Activated naive CD4-positive, alpha-beta T cell treated with anti-CD3 and anti-CD28 coated beads, Interleukin-2, amount 10 ng/mL, durations not matched to agents 7 days and 5 days (primary cell): ENCODE measurements at regions of chr10 and their contacts with region 1.

Region 1: GRCh38 chr10:98467506-98468346 is 21.0 kb upstream of the HPS1 start:
- DNase-seq: peak; percentile 73
- H3K4me3 Mint-ChIP-seq: peak overlapping the region; percentile 84
- H3K27ac Mint-ChIP-seq: no peak overlapping the region
- H3K4me1 Mint-ChIP-seq: peaks cover 8% of the 10 kb centered on the region
- H3K27me3 Mint-ChIP-seq: peaks cover 44% of the 10 kb centered on the region

Region 2: DNA sequence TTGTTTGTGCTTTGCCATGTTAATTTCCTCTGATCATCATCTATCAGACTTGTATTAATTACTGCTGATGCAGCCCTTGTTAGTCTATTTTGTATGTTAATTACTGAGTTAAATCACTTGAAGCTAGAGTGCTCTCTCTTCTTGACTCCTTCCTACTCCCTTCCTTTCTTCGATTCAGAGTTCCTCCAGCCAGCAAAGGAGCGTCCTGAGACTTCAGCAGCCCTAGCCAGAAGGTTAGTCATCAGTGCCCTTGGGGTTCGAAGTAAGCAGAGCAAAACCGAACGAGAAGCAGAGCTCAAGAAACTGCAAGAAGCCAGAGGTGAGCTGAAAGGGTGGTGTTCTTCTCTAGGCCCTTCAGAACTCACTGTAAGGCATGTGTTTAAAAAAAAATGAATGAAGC is 231.9 kb before region 1 on chr10:
- CTCF ChIA-PET with region 1: no interaction called
- DNase-seq: no peak
- H3K4me3 Mint-ChIP-seq: no peak overlapping the region
- H3K27ac Mint-ChIP-seq: no peak overlapping the region
- H3K4me1 Mint-ChIP-seq: peaks cover 3% of the 10 kb centered on the region
- H3K27me3 Mint-ChIP-seq: no peaks in the 10 kb centered on the region

Region 3: DNA sequence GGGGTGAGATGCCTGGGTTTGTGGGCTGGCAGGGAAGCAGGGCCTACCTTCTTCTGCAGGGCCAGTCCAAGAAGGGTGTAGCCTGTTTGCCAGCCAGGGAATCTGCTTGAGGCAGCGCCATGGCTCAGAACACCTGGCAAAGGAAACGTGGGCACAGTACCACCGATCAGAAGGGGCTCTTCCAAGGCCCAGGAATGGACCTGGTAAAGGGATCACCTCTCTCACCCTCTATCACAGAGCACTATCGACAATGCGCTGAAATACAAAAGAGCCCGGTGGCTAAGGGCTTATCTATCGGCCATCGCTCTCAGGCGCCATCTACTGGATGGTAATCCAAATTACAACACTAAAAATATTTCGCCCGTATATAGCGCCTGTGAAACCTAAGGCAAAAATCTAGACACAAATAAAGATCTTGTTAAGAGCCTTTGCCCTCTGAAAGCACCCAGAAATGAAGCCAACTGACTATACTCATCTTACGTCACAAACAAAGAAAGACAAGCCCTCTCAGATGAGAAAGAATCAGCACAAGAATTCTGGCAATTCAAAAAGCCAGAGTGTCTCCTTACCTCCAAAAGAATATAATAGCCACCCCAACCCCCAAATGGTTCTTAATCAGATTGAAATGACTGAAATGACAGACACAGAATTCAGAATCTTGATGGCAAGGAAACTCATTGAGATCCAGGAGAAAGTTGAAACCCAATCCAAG is 196.8 kb after region 1 on chr10:
- CTCF ChIA-PET with region 1: interaction called, 10 read pairs
- DNase-seq: peak; percentile 38
- H3K4me3 Mint-ChIP-seq: no peak overlapping the region
- H3K27ac Mint-ChIP-seq: no peak overlapping the region
- H3K4me1 Mint-ChIP-seq: no peaks in the 10 kb centered on the region
- H3K27me3 Mint-ChIP-seq: no peaks in the 10 kb centered on the region

Region 4: GRCh38 chr10:99248824-99249223 is 781.1 kb after region 1 on chr10:
- CTCF ChIA-PET with region 1: interaction called, 16 read pairs
- DNase-seq: no peak
- H3K4me3 Mint-ChIP-seq: no peak overlapping the region
- H3K27ac Mint-ChIP-seq: no peak overlapping the region
- H3K4me1 Mint-ChIP-seq: no peaks in the 10 kb centered on the region
- H3K27me3 Mint-ChIP-seq: no peaks in the 10 kb centered on the region